ENCODE measurements at regions of chr10 and their contacts with region 1.

Region 1: DNA sequence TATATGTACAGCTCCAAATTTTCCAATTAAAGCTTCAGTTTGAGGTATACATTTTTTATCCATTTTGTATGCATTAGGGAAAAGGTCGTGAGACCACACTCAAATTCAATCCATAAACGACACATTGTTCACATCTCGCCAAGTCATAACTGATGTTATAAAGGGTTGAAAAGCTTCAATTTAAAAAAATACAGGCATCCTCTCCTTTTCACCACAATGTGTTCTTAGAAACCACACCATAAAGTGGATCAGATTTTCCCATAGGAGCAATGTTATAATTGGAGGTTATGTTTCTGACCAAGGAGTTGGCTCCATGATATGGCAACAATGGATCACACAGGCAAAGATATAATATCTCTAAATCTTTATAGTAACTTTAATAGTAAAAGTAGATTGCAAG is 663.6 kb downstream of the PARD3 start:
- DNase-seq: no peak
- ATAC-seq: no peak
- H3K4me3 ChIP-seq: no peak overlapping the region
- H3K27ac ChIP-seq: no peak overlapping the region
- H3K4me1 ChIP-seq: peaks cover 8% of the 10 kb centered on the region
- H3K27me3 ChIP-seq: no peaks in the 10 kb centered on the region
- CTCF ChIP-seq: no peak

Region 2: DNA sequence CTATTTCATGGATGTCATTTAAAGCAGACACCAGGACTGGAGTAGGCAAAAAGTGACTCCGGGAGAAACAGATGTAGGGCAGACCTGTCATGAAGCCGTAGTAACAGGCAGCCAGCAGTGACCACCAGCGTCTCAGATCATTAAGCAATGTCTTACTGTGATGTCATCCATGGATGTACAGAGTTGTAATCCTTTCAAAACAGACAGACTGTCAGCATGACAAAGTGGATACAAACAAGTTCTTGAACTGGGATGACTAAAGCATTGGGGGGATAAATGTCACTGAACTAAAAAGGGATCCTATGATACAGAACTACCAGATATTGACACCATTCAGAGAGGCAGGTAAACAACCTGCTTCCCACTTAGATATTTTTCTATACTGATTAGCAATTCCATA is 11.9 kb before region 1 on chr10:
- CTCF ChIA-PET with region 1: interaction called, 10 read pairs
- POLR2A ChIA-PET with region 1: no interaction called
- intact Hi-C with region 1: no loop called
- DNase-seq: peak; percentile 42
- ATAC-seq: no peak
- H3K4me3 ChIP-seq: no peak overlapping the region
- H3K27ac ChIP-seq: no peak overlapping the region
- H3K4me1 ChIP-seq: peaks cover 23% of the 10 kb centered on the region
- H3K27me3 ChIP-seq: no peaks in the 10 kb centered on the region
- CTCF ChIP-seq: no peak